Gastrocnemius medialis (tissue), 4 donors: ENCODE measurements at regions of chr11 and their contacts with region 1.

Region 1: GRCh38 chr11:87037450-87038234 is at the start of gene TMEM135:
- DNase-seq: peak; percentile 90 to 94
- ATAC-seq: peak; percentile 94 to 95
- H3K4me3 ChIP-seq: peak within 1 kb of the TSS; percentile 68 to 96 (median 90)
- H3K27ac ChIP-seq: peak within 1 kb of the TSS; percentile 90 to 94 (median 92)
- H3K4me1 ChIP-seq: peaks cover 23 to 28% of the 10 kb centered on the region in 2 donors
- H3K27me3 ChIP-seq: no peaks in the 10 kb centered on the region
- CTCF ChIP-seq: peak in 1 of 5 experiments; percentile 25
- POLR2A ChIP-seq: peak; percentile 58 to 61
- total RNA-seq, gene TMEM135: 7.9 to 38.7 (median 18.9) TPM

Region 2: GRCh38 chr11:86805873-86806310 is 231.8 kb before region 1 on chr11:
- in situ Hi-C with region 1: no loop called
- intact Hi-C with region 1: no loop called
- DNase-seq: no peak
- ATAC-seq: peak in 1 of 2 donors; percentile 18
- H3K4me3 ChIP-seq: no peak overlapping the region
- H3K27ac ChIP-seq: peak overlapping the region in 2 of 4 donors; percentile 7 to 15
- H3K4me1 ChIP-seq: peaks cover 5 to 31% of the 10 kb centered on the region in 2 donors
- H3K27me3 ChIP-seq: no peaks in the 10 kb centered on the region
- CTCF ChIP-seq: no peak
- POLR2A ChIP-seq: no peak

Region 3: GRCh38 chr11:86818466-86819192 is 219.0 kb before region 1 on chr11:
- in situ Hi-C with region 1: no loop called
- intact Hi-C with region 1: no loop called
- DNase-seq: no peak
- ATAC-seq: peak in 1 of 2 donors; percentile 77
- H3K4me3 ChIP-seq: peak overlapping the region in 1 of 4 donors; percentile 13
- H3K27ac ChIP-seq: no peak overlapping the region
- H3K4me1 ChIP-seq: peaks cover 28 to 36% of the 10 kb centered on the region in 2 donors
- H3K27me3 ChIP-seq: no peaks in the 10 kb centered on the region
- CTCF ChIP-seq: peak; percentile 71 to 83 (median 76)
- POLR2A ChIP-seq: no peak

Region 4: GRCh38 chr11:86938900-86939880 is 98.5 kb before region 1 on chr11:
- in situ Hi-C with region 1: no loop called
- intact Hi-C with region 1: loop called (anchors 5 kb)
- DNase-seq: no peak
- ATAC-seq: peak in 1 of 2 donors; percentile 33
- H3K4me3 ChIP-seq: peak overlapping the region in 2 of 4 donors; percentile 40 to 54
- H3K27ac ChIP-seq: peak overlapping the region; percentile 74 to 85 (median 82)
- H3K4me1 ChIP-seq: peaks cover 47 to 50% of the 10 kb centered on the region in 2 donors
- H3K27me3 ChIP-seq: no peaks in the 10 kb centered on the region
- CTCF ChIP-seq: peak; percentile 63 to 77 (median 68)
- POLR2A ChIP-seq: no peak

Region 5: GRCh38 chr11:86955361-86956120 is 82.1 kb before region 1 on chr11 and contains the start of gene FZD4:
- in situ Hi-C with region 1: loop called in 1 of 4 experiments (anchors 5 kb)
- intact Hi-C with region 1: loop called (anchors 1 kb)
- DNase-seq: peak; percentile 85 to 90
- ATAC-seq: peak; percentile 67 to 74
- H3K4me3 ChIP-seq: peak within 1 kb of the TSS; percentile 76 to 99 (median 88)
- H3K27ac ChIP-seq: peak within 1 kb of the TSS; percentile 93 to 100 (median 98)
- H3K4me1 ChIP-seq: peaks cover 37 to 49% of the 10 kb centered on the region in 2 donors
- H3K27me3 ChIP-seq: no peaks in the 10 kb centered on the region
- CTCF ChIP-seq: peak; percentile 22 to 63 (median 58)
- POLR2A ChIP-seq: peak in 1 of 2 donors; percentile 51
- total RNA-seq, gene FZD4: 31.7 to 52.2 (median 39.1) TPM

Region 6: DNA sequence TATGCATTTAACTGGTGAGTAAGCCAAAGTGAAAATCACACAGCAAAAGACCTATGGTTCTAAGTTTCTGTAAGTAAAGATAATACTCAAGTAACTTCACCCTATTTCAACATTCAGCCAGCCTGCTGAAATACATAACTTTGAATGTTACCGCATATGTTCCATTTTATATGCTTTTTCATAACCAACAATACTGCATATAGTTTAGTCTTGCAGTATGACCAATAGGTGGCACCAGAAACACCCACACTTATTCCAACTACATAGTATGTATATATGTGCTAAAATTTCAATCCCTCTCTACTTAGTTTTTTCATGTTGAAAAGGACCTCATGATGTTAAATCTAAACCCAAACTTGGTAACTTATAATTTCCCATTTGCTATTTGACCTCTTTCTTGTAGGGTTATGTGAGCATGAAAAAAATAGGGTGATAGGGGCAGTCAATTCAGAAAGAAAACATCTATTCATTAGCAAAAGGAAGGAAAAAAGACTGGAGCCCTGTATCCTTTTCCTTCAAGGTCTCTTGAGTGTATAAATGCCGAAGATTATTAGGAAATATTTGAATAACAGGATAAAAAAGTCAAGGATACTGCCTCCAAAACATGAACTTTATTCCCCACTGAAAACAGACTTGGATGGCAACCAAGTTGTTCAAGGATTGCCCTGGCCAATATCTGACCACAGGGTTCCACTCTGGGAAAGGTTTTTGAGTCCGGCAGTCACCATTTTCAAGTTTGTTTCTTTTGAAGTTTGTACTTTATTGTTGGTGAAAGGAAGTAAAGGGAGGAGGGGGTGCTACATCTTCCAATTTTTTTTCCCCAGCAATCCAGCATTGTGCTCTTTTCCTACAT is 58.7 kb before region 1 on chr11:
- in situ Hi-C with region 1: no loop called
- intact Hi-C with region 1: loop called (anchors 1 kb)
- DNase-seq: no peak
- ATAC-seq: no peak
- H3K4me3 ChIP-seq: no peak overlapping the region
- H3K27ac ChIP-seq: peak overlapping the region; percentile 45 to 75 (median 64)
- H3K4me1 ChIP-seq: peaks cover 59 to 63% of the 10 kb centered on the region in 2 donors
- H3K27me3 ChIP-seq: no peaks in the 10 kb centered on the region
- CTCF ChIP-seq: peak in 4 of 5 experiments; percentile 36 to 55 (median 46)
- POLR2A ChIP-seq: no peak

Region 7: DNA sequence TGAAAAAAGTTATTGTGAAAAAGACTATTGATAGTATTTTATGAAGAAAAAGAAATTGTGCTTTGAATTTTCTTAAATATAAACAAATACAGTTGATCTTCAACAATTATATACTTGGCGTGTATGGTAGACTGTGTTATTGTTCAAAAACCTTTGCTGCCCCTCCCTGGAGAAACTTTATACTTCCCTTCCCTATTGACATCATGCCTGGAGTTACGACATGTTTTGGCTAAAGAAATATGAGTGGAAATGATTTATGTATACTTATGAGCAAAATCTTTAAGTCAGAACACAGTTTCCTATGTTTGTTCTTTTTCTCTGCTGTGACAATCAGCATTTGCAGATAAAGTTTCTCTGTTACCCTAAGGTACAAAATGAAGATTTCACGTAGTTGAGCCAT is 243.9 kb after region 1 on chr11:
- in situ Hi-C with region 1: no loop called
- intact Hi-C with region 1: loop called (anchors 5 kb)
- DNase-seq: no peak
- ATAC-seq: peak; percentile 85 to 88
- H3K4me3 ChIP-seq: no peak overlapping the region
- H3K27ac ChIP-seq: peak overlapping the region in 1 of 4 donors; percentile 23
- H3K4me1 ChIP-seq: peaks cover 14 to 20% of the 10 kb centered on the region in 2 donors
- H3K27me3 ChIP-seq: no peaks in the 10 kb centered on the region
- CTCF ChIP-seq: peak in 3 of 5 experiments; percentile 24 to 35 (median 25)
- POLR2A ChIP-seq: no peak